Activated B cell treated with CpG ODN at 0.5 μM for 24 hours (primary cell): ENCODE measurements at regions of chr19 and their contacts with region 1.

Region 1: DNA sequence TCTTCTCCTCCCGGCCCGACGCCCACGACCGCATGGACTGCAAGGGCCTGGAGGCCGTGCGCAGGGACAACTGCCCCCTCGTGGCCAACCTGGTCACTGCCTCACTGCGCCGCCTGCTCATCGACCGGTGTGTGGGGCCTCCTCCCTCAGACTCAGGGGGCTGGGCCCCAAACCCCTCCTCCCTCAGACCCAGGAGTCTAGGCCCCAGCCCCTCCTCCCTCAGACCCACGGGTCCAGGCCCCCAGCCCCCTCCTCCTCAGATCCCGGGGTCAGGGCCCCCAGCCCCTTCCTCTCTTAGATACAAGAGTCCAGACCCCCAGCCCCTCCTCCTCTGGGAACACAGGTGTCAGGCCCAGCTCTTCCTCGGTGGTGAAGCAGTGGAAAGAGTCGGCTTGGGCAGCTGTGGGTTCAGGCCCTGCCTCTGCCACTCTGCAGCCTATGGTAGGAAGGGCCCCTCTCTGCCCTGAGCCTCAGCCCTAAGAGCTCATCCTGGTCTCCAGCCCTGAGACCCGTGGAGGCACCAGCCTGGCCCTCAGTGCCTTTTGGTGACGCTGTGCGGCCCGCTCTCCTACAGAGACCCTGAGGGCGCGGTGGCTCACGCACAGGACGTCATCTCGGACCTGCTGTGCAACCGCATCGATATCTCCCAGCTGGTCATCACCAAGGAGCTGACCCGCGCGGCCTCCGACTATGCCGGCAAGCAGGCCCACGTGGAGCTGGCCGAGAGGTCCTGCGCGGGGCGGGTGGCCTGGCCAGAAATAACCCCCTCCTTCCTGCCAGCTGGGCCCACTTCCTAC is 3.7 kb upstream of the SPIB start:
- DNase-seq: peak; percentile 84
- ATAC-seq: peak; percentile 32
- H3K4me3 Mint-ChIP-seq: peak overlapping the region; percentile 70
- H3K27ac Mint-ChIP-seq: peak overlapping the region; percentile 95
- H3K4me1 Mint-ChIP-seq: peaks cover 39% of the 10 kb centered on the region
- H3K27me3 Mint-ChIP-seq: no peaks in the 10 kb centered on the region
- CTCF ChIP-seq: no peak

Region 2: GRCh38 chr19:50187937-50188336 is 227.1 kb before region 1 on chr19:
- CTCF ChIA-PET with region 1: no interaction called
- POLR2A ChIA-PET with region 1: no interaction called
- intact Hi-C with region 1: no loop called
- DNase-seq: no peak
- ATAC-seq: no peak
- H3K4me3 Mint-ChIP-seq: no peak overlapping the region
- H3K27ac Mint-ChIP-seq: no peak overlapping the region
- H3K4me1 Mint-ChIP-seq: no peaks in the 10 kb centered on the region
- H3K27me3 Mint-ChIP-seq: peaks cover 9% of the 10 kb centered on the region
- CTCF ChIP-seq: no peak

Region 3: GRCh38 chr19:50368649-50369570 is 46.2 kb before region 1 on chr19:
- CTCF ChIA-PET with region 1: interaction called, 8 read pairs
- POLR2A ChIA-PET with region 1: interaction called, 7 read pairs
- intact Hi-C with region 1: loop called (anchors 1 kb)
- DNase-seq: peak; percentile 78
- ATAC-seq: peak; percentile 79
- H3K4me3 Mint-ChIP-seq: peak overlapping the region; percentile 90
- H3K27ac Mint-ChIP-seq: peak overlapping the region; percentile 87
- H3K4me1 Mint-ChIP-seq: peaks cover 39% of the 10 kb centered on the region
- H3K27me3 Mint-ChIP-seq: no peaks in the 10 kb centered on the region
- CTCF ChIP-seq: no peak

Region 4: GRCh38 chr19:50383852-50384684 is 31.0 kb before region 1 on chr19 and contains the start of gene POLD1:
- CTCF ChIA-PET with region 1: interaction called, 3 read pairs
- POLR2A ChIA-PET with region 1: interaction called, 23 read pairs
- intact Hi-C with region 1: loop called (anchors 1 kb)
- DNase-seq: peak; percentile 97
- ATAC-seq: peak; percentile 94
- H3K4me3 Mint-ChIP-seq: peak within 1 kb of the TSS; percentile 96
- H3K27ac Mint-ChIP-seq: peak within 1 kb of the TSS; percentile 85
- H3K4me1 Mint-ChIP-seq: peaks cover 28% of the 10 kb centered on the region
- H3K27me3 Mint-ChIP-seq: no peaks in the 10 kb centered on the region
- CTCF ChIP-seq: no peak
- total RNA-seq, gene POLD1: 58.8 and 65.5 TPM in 2 replicates

Region 5: GRCh38 chr19:50461066-50461875 is 46.2 kb after region 1 on chr19:
- CTCF ChIA-PET with region 1: interaction called, 16 read pairs
- POLR2A ChIA-PET with region 1: interaction called, 29 read pairs
- intact Hi-C with region 1: loop called (anchors 1 kb)
- DNase-seq: peak; percentile 61
- ATAC-seq: peak; percentile 65
- H3K4me3 Mint-ChIP-seq: peak overlapping the region; percentile 44
- H3K27ac Mint-ChIP-seq: peak overlapping the region; percentile 90
- H3K4me1 Mint-ChIP-seq: peaks cover 24% of the 10 kb centered on the region
- H3K27me3 Mint-ChIP-seq: no peaks in the 10 kb centered on the region
- CTCF ChIP-seq: peak; percentile 29

Region 6: GRCh38 chr19:50511068-50511822 is 96.2 kb after region 1 on chr19 and contains the start of gene JOSD2:
- CTCF ChIA-PET with region 1: no interaction called
- POLR2A ChIA-PET with region 1: interaction called, 11 read pairs
- intact Hi-C with region 1: loop called (anchors 1 kb)
- DNase-seq: peak; percentile 96
- ATAC-seq: peak; percentile 94
- H3K4me3 Mint-ChIP-seq: peak within 1 kb of the TSS; percentile 89
- H3K27ac Mint-ChIP-seq: peak within 1 kb of the TSS; percentile 93
- H3K4me1 Mint-ChIP-seq: peaks cover 13% of the 10 kb centered on the region
- H3K27me3 Mint-ChIP-seq: peaks cover 5% of the 10 kb centered on the region
- CTCF ChIP-seq: no peak
- total RNA-seq, gene JOSD2: 21.0 and 23.7 TPM in 2 replicates